ENCODE measurements at regions of chr4 and their contacts with region 1.

Region 1: DNA sequence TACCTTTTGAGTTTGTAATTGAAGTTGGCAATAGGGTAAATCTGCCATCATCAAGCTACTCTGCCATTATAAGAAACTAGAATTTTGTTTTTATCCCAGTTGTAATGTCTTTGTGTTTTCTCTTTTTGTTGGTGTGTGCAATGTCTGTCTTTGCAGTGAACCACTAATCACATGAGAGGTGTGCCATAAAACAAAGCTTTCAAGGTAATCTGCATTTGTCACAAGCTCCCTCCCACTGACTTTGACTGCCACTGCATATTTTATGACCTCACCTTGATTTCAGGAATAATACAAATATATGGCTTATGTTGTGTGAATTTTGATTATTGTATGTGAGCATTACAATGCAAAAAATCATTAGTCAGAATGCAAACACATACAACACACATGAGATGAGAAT is 9.0 kb upstream of the GBA3 start:
- DNase-seq: no peak
- H3K4me3 ChIP-seq: no peak overlapping the region
- H3K27ac ChIP-seq: no peak overlapping the region
- H3K4me1 ChIP-seq: peaks cover 7% of the 10 kb centered on the region
- H3K27me3 ChIP-seq: no peaks in the 10 kb centered on the region
- CTCF ChIP-seq: no peak
- POLR2A ChIP-seq: no peak

Region 2: DNA sequence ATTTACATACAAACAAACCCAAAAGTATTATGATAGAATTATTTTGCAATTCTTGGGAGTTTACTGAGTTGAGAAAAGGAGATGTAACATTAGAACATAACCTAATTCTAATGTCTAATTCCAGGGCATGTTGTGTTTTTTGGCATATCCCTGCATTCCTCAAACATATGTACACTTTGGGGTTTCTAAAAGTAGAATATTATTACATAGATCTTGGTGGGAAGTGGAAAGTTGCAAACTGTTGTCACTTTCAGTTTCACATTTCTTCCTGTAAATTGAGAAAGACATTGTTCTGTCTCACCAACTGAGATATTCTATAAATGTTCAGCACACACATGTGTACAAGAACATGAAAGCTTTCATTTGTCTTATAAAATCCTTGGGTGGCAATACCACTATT is 15.4 kb before region 1 on chr4:
- intact Hi-C with region 1: loop called (anchors 1 kb)
- DNase-seq: no peak
- H3K4me3 ChIP-seq: no peak overlapping the region
- H3K27ac ChIP-seq: no peak overlapping the region
- H3K4me1 ChIP-seq: no peaks in the 10 kb centered on the region
- H3K27me3 ChIP-seq: no peaks in the 10 kb centered on the region
- CTCF ChIP-seq: no peak
- POLR2A ChIP-seq: no peak

Region 3: GRCh38 chr4:22842360-22843018 is 158.8 kb after region 1 on chr4:
- intact Hi-C with region 1: no loop called
- DNase-seq: no peak
- H3K4me3 ChIP-seq: no peak overlapping the region
- H3K27ac ChIP-seq: no peak overlapping the region
- H3K4me1 ChIP-seq: no peaks in the 10 kb centered on the region
- H3K27me3 ChIP-seq: no peaks in the 10 kb centered on the region
- CTCF ChIP-seq: no peak
- POLR2A ChIP-seq: no peak

Region 4: DNA sequence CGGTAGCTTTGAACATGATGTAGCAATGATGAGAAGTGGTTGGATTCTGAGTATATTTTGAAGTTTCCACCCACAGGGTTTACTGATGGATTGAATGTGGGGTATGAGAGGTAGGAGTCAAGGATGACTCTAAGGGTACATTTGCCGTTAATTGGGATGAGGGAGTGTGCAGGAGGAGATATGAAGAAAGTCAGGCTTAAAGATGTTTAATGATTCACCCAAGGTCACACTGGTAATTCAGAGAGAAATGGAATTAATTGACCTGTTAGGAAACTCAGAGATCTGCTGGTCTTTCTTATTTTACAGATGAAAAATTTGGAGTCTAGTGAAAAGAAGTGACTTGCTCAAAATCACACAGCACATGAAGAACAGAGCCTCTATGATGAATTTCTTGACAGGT is 399.7 kb after region 1 on chr4:
- intact Hi-C with region 1: no loop called
- DNase-seq: no peak
- H3K4me3 ChIP-seq: no peak overlapping the region
- H3K27ac ChIP-seq: no peak overlapping the region
- H3K4me1 ChIP-seq: no peaks in the 10 kb centered on the region
- H3K27me3 ChIP-seq: no peaks in the 10 kb centered on the region
- CTCF ChIP-seq: no peak
- POLR2A ChIP-seq: no peak

Region 5: GRCh38 chr4:24372881-24373280 is 1689.2 kb after region 1 on chr4:
- intact Hi-C with region 1: no loop called
- DNase-seq: no peak
- H3K4me3 ChIP-seq: no peak overlapping the region
- H3K27ac ChIP-seq: no peak overlapping the region
- H3K4me1 ChIP-seq: no peaks in the 10 kb centered on the region
- H3K27me3 ChIP-seq: no peaks in the 10 kb centered on the region
- CTCF ChIP-seq: no peak
- POLR2A ChIP-seq: no peak

Measured in vagina (tissue), 2 donors.